Sigmoid colon (tissue), 7 donors: ENCODE measurements at regions of chr11 and their contacts with region 1.

Region 1: DNA sequence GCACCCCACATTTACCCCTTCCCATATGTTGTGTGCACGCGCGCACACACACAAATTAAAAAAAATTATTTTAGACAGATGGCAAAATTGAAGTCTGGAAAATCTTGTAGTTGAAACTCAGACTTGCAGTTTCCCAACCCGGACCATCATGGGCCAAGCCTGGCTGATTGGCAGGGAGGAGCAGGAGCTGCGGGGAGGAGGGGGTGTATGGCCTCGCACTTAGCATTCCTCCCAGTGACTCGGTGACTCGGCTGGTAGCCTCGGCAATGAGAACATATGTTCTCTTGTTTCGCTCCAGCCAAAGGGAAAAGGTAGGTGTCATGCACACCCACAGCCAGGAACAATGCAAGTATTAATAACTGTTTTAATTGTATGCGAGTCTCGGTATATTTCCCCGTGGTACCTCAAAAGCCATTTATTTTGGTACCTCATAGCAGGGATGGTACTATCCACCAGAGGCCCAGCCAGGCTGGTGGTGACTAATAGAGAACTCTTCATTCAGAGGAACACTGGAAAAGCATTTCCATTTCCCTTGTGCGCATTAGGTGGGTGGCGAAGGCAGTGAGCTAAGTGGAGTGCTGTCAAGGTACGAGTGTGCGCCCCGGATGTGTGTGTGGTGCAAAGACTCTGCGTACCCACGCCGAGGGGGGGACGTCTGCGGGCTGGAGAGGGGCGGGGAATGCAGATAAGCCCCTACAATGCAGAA is 92.5 kb downstream of the DSCAML1 start:
- DNase-seq: no peak
- H3K4me3 ChIP-seq: no peak overlapping the region
- H3K27ac ChIP-seq: no peak overlapping the region
- H3K4me1 ChIP-seq: no peaks in the 10 kb centered on the region
- H3K27me3 ChIP-seq: no peaks in the 10 kb centered on the region
- CTCF ChIP-seq: no peak
- EP300 ChIP-seq: no peak
- POLR2A ChIP-seq: no peak

Region 2: DNA sequence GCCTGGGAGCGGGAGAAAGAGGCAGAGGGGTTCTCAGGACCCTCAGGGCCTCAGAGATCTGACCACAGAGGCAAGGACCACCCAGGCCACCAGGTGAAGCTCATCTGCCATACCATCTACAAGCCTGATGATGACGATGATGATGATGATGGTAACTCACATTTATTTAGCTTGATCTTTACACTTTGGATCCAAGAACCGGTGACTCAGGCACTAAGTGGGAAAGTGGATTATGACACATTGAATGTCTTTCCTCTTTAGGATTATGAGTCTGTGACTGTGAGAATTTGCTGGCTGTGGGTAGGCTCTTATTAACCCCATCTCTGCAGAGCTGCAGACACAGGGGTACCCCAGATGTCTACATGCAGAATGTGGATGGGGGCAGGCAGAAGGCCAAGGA is 17.8 kb before region 1 on chr11:
- intact Hi-C with region 1: no loop called
- DNase-seq: no peak
- H3K4me3 ChIP-seq: no peak overlapping the region
- H3K27ac ChIP-seq: no peak overlapping the region
- H3K4me1 ChIP-seq: no peaks in the 10 kb centered on the region
- H3K27me3 ChIP-seq: no peaks in the 10 kb centered on the region
- CTCF ChIP-seq: no peak
- EP300 ChIP-seq: no peak
- POLR2A ChIP-seq: no peak

Region 3: DNA sequence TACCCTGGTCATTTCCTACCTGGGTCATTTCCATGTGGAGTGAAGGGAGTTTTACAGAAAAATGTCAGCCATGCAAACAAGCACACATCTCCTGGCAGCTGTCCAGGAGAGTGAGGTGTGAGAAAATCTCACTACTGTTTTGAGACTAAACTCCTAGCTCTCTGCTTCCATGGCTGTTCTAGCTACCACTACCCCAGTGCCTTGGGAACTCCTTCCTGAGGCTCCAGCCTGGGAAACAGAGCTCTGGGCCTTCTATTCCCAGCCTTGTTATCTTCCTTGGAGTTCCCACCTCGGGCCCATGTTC is 227.5 kb after region 1 on chr11:
- intact Hi-C with region 1: loop called (anchors 10 kb)
- DNase-seq: peak; percentile 62
- H3K4me3 ChIP-seq: no peak overlapping the region
- H3K27ac ChIP-seq: no peak overlapping the region
- H3K4me1 ChIP-seq: peaks cover 0 to 5% (median 2%) of the 10 kb centered on the region in 4 donors
- H3K27me3 ChIP-seq: no peaks in the 10 kb centered on the region
- CTCF ChIP-seq: no peak
- EP300 ChIP-seq: no peak
- POLR2A ChIP-seq: no peak